ENCODE measurements at regions of chr1 and their contacts with region 1.

Region 1: GRCh38 chr1:59013276-59013927 is 229.6 kb upstream of the JUN start:
- DNase-seq: peak; percentile 62
- ATAC-seq: peak; percentile 64
- H3K4me3 ChIP-seq: peak overlapping the region in 3 of 5 experiments; percentile 24 to 45 (median 45)
- H3K4me3 Mint-ChIP-seq: peak overlapping the region; percentile 81
- H3K27ac ChIP-seq: peak overlapping the region; percentile 65 to 82
- H3K27ac Mint-ChIP-seq: peak overlapping the region; percentile 92
- H3K4me1 ChIP-seq: peaks cover 44 to 64% of the 10 kb centered on the region in 2 donors
- H3K4me1 Mint-ChIP-seq: peaks cover 68% of the 10 kb centered on the region
- H3K27me3 ChIP-seq: no peaks in the 10 kb centered on the region
- H3K27me3 Mint-ChIP-seq: no peaks in the 10 kb centered on the region
- CTCF ChIP-seq: no peak

Region 2: GRCh38 chr1:58903514-58904298 is 109.7 kb before region 1 on chr1:
- CTCF ChIA-PET with region 1: no interaction called
- POLR2A ChIA-PET with region 1: no interaction called
- intact Hi-C with region 1: loop called (anchors 5 kb)
- DNase-seq: peak; percentile 77
- ATAC-seq: peak; percentile 88
- H3K4me3 ChIP-seq: peak overlapping the region; percentile 45 to 74 (median 60)
- H3K4me3 Mint-ChIP-seq: peak overlapping the region; percentile 85
- H3K27ac ChIP-seq: peak overlapping the region; percentile 49 to 82
- H3K27ac Mint-ChIP-seq: peak overlapping the region; percentile 86
- H3K4me1 ChIP-seq: peaks cover 10% of the 10 kb centered on the region in 2 donors
- H3K4me1 Mint-ChIP-seq: peaks cover 13% of the 10 kb centered on the region
- H3K27me3 ChIP-seq: no peaks in the 10 kb centered on the region
- H3K27me3 Mint-ChIP-seq: no peaks in the 10 kb centered on the region
- CTCF ChIP-seq: no peak

Region 3: DNA sequence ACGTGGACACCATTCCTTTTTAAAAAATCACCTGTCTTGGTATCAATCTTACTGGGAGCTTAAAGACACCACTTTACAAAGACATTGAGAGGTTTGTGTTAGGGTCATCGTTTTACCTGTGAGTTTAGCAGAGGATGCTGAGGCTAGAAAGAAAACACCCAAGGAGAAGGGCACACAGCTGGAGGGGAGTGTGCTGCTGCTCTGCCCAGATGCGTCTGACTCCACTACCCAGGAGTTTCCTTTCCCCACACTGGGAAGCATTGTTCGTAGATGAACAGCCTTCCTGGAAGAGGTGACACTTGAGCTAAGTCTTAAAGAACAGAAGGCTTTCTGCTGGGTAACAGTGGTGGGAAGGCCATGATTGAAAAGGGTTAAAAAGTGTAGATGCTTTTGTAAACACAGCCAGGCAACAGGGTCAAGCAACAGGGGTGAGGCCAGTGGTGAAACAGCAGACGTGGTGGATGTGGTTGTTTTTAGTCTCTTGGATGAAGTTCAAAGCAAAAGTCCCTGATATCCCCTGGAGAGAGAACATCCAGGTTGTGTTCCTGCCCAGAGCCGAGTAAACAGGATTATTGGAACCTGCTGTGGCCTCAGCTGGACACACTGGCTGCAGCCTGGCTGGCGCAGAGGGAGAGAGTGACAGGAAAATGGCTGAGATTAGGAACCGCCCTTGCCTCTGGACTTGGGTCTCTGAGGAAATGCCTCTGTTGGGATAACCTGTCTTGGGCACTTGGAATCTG is 31.0 kb before region 1 on chr1:
- CTCF ChIA-PET with region 1: no interaction called
- POLR2A ChIA-PET with region 1: no interaction called
- intact Hi-C with region 1: no loop called
- DNase-seq: no peak
- ATAC-seq: no peak
- H3K4me3 ChIP-seq: no peak overlapping the region
- H3K4me3 Mint-ChIP-seq: no peak overlapping the region
- H3K27ac ChIP-seq: no peak overlapping the region
- H3K27ac Mint-ChIP-seq: peak overlapping the region; percentile 8
- H3K4me1 ChIP-seq: peaks cover 22 to 24% of the 10 kb centered on the region in 2 donors
- H3K4me1 Mint-ChIP-seq: peaks cover 29% of the 10 kb centered on the region
- H3K27me3 ChIP-seq: no peaks in the 10 kb centered on the region
- H3K27me3 Mint-ChIP-seq: no peaks in the 10 kb centered on the region
- CTCF ChIP-seq: no peak

Region 4: GRCh38 chr1:59025898-59026426 is 12.6 kb after region 1 on chr1:
- CTCF ChIA-PET with region 1: interaction called, 8 read pairs
- POLR2A ChIA-PET with region 1: interaction called, 6 read pairs
- intact Hi-C with region 1: loop called (anchors 2 kb)
- DNase-seq: peak; percentile 43
- ATAC-seq: peak; percentile 82
- H3K4me3 ChIP-seq: peak overlapping the region in 2 of 5 experiments; percentile 5 to 64
- H3K4me3 Mint-ChIP-seq: peak overlapping the region; percentile 64
- H3K27ac ChIP-seq: peak overlapping the region; percentile 55 to 70
- H3K27ac Mint-ChIP-seq: peak overlapping the region; percentile 91
- H3K4me1 ChIP-seq: peaks cover 30 to 34% of the 10 kb centered on the region in 2 donors
- H3K4me1 Mint-ChIP-seq: peaks cover 36% of the 10 kb centered on the region
- H3K27me3 ChIP-seq: no peaks in the 10 kb centered on the region
- H3K27me3 Mint-ChIP-seq: no peaks in the 10 kb centered on the region
- CTCF ChIP-seq: no peak

Region 5: GRCh38 chr1:59046730-59047157 is 33.3 kb after region 1 on chr1:
- CTCF ChIA-PET with region 1: no interaction called
- POLR2A ChIA-PET with region 1: no interaction called
- intact Hi-C with region 1: loop called (anchors 5 kb)
- DNase-seq: peak; percentile 75
- ATAC-seq: peak; percentile 95
- H3K4me3 ChIP-seq: peak overlapping the region in 2 of 5 experiments; percentile 8 to 23
- H3K4me3 Mint-ChIP-seq: peak overlapping the region; percentile 59
- H3K27ac ChIP-seq: peak overlapping the region; percentile 66 to 69
- H3K27ac Mint-ChIP-seq: peak overlapping the region; percentile 92
- H3K4me1 ChIP-seq: peaks cover 24% of the 10 kb centered on the region in 2 donors
- H3K4me1 Mint-ChIP-seq: peaks cover 31% of the 10 kb centered on the region
- H3K27me3 ChIP-seq: no peaks in the 10 kb centered on the region
- H3K27me3 Mint-ChIP-seq: no peaks in the 10 kb centered on the region
- CTCF ChIP-seq: peak; percentile 40

Region 6: GRCh38 chr1:59071289-59071688 is 57.9 kb after region 1 on chr1:
- CTCF ChIA-PET with region 1: no interaction called
- POLR2A ChIA-PET with region 1: no interaction called
- intact Hi-C with region 1: loop called (anchors 5 kb)
- DNase-seq: peak; percentile 40
- ATAC-seq: peak; percentile 28
- H3K4me3 ChIP-seq: no peak overlapping the region
- H3K4me3 Mint-ChIP-seq: peak overlapping the region; percentile 67
- H3K27ac ChIP-seq: peak overlapping the region; percentile 22 to 31
- H3K27ac Mint-ChIP-seq: peak overlapping the region; percentile 88
- H3K4me1 ChIP-seq: peaks cover 22 to 23% of the 10 kb centered on the region in 2 donors
- H3K4me1 Mint-ChIP-seq: peaks cover 27% of the 10 kb centered on the region
- H3K27me3 ChIP-seq: no peaks in the 10 kb centered on the region
- H3K27me3 Mint-ChIP-seq: no peaks in the 10 kb centered on the region
- CTCF ChIP-seq: no peak